Esophagus muscularis mucosa (tissue), 4 donors: ENCODE measurements at regions of chr3 and their contacts with region 1.

Region 1: GRCh38 chr3:120156699-120157098 is 62.5 kb upstream of the GSK3B start:
- DNase-seq: no peak
- H3K4me3 ChIP-seq: no peak overlapping the region
- H3K27ac ChIP-seq: no peak overlapping the region
- H3K4me1 ChIP-seq: peaks cover 7 to 18% (median 15%) of the 10 kb centered on the region in 4 donors
- H3K27me3 ChIP-seq: no peaks in the 10 kb centered on the region
- CTCF ChIP-seq: no peak
- EP300 ChIP-seq: no peak
- POLR2A ChIP-seq: no peak

Region 2: DNA sequence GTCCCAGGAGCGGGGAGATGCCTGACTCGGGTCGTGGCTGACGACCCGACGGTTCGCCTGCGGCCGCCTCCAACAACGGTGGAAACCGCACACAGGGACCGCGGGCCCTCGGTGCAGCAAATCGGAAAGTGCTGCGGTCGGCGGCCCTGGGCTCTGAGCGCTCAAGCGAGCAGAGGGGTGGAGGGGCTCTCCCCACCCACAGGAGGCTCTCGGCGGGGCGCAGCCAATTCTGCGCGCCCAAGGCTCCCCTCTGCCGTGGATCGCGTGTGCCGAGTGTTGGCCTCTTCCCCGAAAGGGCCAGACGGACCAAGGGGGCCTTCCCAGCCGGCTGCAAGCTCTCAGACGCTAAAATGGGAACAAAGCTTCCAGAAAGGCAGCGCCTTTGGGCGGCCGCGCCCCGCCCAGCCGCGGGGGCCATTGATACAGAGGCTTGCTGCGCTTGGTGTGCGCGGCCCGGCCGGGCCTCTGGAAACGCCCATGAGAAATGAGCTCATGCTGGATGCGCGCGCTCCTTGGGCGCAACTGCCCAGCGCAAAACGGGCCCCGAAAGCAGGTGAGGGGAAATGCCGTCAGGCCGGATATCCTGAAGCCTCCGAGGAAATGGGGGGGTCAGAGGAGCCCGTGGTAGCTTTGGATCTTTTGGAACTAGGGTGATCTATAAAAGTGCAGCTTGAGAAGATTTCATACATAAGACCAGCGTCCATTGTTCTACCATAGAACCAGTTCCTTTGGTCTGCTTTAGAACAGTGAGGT is 61.3 kb before region 1 on chr3:
- intact Hi-C with region 1: loop called (anchors 5 kb)
- DNase-seq: peak; percentile 97
- H3K4me3 ChIP-seq: peak overlapping the region; percentile 86 to 90 (median 88)
- H3K27ac ChIP-seq: peak overlapping the region; percentile 99 to 100 (median 99)
- H3K4me1 ChIP-seq: peaks cover 9 to 31% (median 26%) of the 10 kb centered on the region in 4 donors
- H3K27me3 ChIP-seq: no peaks in the 10 kb centered on the region
- CTCF ChIP-seq: no peak
- EP300 ChIP-seq: no peak
- POLR2A ChIP-seq: peak; percentile 89

Region 3: GRCh38 chr3:120622870-120623731 is 466.4 kb after region 1 on chr3:
- intact Hi-C with region 1: no loop called
- DNase-seq: no peak
- H3K4me3 ChIP-seq: no peak overlapping the region
- H3K27ac ChIP-seq: no peak overlapping the region
- H3K4me1 ChIP-seq: no peaks in the 10 kb centered on the region
- H3K27me3 ChIP-seq: no peaks in the 10 kb centered on the region
- CTCF ChIP-seq: peak in 1 of 3 experiments; percentile 20
- EP300 ChIP-seq: no peak
- POLR2A ChIP-seq: no peak